MCF 10A (cell line): ENCODE measurements at regions of chr18 and their contacts with region 1.

Region 1: GRCh38 chr18:49858309-49859020 is 45.1 kb upstream of the ACAA2 start:
- DNase-seq: peak; percentile 72
- H3K4me3 Mint-ChIP-seq: no peak overlapping the region
- H3K27ac Mint-ChIP-seq: no peak overlapping the region
- H3K4me1 Mint-ChIP-seq: peaks cover 6% of the 10 kb centered on the region
- H3K27me3 Mint-ChIP-seq: no peaks in the 10 kb centered on the region
- CTCF ChIP-seq: peak; percentile 92

Region 2: GRCh38 chr18:49510393-49511115 is 347.9 kb before region 1 on chr18:
- CTCF ChIA-PET with region 1: interaction called, 52 read pairs
- POLR2A ChIA-PET with region 1: no interaction called
- intact Hi-C with region 1: loop called (anchors 1 kb)
- DNase-seq: peak; percentile 66
- H3K4me3 Mint-ChIP-seq: no peak overlapping the region
- H3K27ac Mint-ChIP-seq: no peak overlapping the region
- H3K4me1 Mint-ChIP-seq: no peaks in the 10 kb centered on the region
- H3K27me3 Mint-ChIP-seq: peaks cover 25% of the 10 kb centered on the region
- CTCF ChIP-seq: peak; percentile 80

Region 3: GRCh38 chr18:49784427-49785185 is 73.9 kb before region 1 on chr18:
- CTCF ChIA-PET with region 1: interaction called, 31 read pairs
- POLR2A ChIA-PET with region 1: interaction called, 3 read pairs
- intact Hi-C with region 1: loop called (anchors 1 kb)
- DNase-seq: no peak
- H3K4me3 Mint-ChIP-seq: no peak overlapping the region
- H3K27ac Mint-ChIP-seq: no peak overlapping the region
- H3K4me1 Mint-ChIP-seq: peaks cover 14% of the 10 kb centered on the region
- H3K27me3 Mint-ChIP-seq: no peaks in the 10 kb centered on the region
- CTCF ChIP-seq: peak; percentile 31

Region 4: GRCh38 chr18:49839012-49839411 is 19.5 kb before region 1 on chr18:
- CTCF ChIA-PET with region 1: interaction called, 26 read pairs
- POLR2A ChIA-PET with region 1: interaction called, 9 read pairs
- intact Hi-C with region 1: no loop called
- DNase-seq: peak; percentile 83
- H3K4me3 Mint-ChIP-seq: no peak overlapping the region
- H3K27ac Mint-ChIP-seq: peak overlapping the region; percentile 77
- H3K4me1 Mint-ChIP-seq: peaks cover 22% of the 10 kb centered on the region
- H3K27me3 Mint-ChIP-seq: no peaks in the 10 kb centered on the region
- CTCF ChIP-seq: no peak

Region 5: DNA sequence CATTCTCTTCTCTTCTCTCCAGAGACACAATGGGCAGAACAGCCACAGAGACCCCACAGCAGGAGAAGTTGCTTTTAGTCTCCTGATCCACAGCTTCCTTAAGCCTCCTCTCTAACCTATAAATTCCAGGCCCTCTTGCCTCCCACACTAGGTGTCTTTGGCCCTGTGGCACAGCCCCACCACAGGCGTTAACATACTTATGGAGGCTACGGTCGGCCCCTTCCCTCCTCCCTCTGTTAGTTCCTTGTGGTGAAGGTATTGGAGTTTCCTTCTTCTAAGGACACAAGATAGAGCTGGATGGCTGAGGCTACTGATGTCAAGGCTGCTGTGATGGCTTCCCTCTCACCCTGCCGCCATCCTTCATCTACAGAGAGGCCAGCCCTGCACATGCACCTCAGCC is 78.4 kb after region 1 on chr18:
- CTCF ChIA-PET with region 1: no interaction called
- POLR2A ChIA-PET with region 1: no interaction called
- intact Hi-C with region 1: no loop called
- DNase-seq: no peak
- H3K4me3 Mint-ChIP-seq: no peak overlapping the region
- H3K27ac Mint-ChIP-seq: no peak overlapping the region
- H3K4me1 Mint-ChIP-seq: no peaks in the 10 kb centered on the region
- H3K27me3 Mint-ChIP-seq: no peaks in the 10 kb centered on the region
- CTCF ChIP-seq: no peak

Region 6: DNA sequence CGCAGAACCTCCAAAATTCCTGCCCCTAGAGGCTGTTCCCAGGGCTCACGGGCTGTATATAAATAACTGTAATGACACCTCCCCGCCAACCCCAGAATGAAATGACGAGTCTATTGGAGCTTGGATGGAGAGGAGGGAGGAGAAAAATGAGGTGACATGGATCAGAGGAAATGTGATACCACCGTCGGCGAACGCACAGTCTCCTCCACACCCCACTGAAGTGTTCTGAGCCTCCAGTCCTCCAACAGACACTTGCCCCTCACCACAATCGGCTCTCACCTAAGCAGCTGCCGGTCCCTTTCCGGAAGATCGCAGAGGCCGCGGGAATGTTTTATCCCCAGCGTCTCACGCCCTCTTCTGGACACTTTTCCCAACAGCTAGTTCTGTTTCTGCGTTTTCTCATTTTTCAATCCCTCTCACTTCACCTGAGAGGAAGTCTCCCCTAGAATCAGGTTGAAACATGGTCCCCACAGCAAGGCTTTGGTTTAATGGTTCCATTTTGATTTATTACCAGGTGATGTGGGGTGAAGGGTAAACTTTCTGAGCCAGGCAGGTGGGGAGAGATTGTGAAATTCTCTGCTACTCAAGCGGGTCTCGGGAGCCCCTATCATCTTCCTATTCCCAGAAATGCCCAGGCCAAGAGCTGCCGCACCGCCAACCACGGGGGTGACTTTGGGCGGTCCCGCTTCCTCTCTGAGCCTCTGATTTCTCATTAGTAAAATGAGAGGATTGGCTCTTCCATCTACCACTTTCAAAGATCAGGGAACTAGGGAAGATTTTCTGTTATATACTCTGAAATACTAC is 345.5 kb after region 1 on chr18:
- CTCF ChIA-PET with region 1: interaction called, 24 read pairs
- POLR2A ChIA-PET with region 1: no interaction called
- intact Hi-C with region 1: no loop called
- DNase-seq: peak; percentile 70
- H3K4me3 Mint-ChIP-seq: peak overlapping the region; percentile 37
- H3K27ac Mint-ChIP-seq: no peak overlapping the region
- H3K4me1 Mint-ChIP-seq: no peaks in the 10 kb centered on the region
- H3K27me3 Mint-ChIP-seq: peaks cover 11% of the 10 kb centered on the region
- CTCF ChIP-seq: peak; percentile 68